Endothelial cell of umbilical vein (primary cell): ENCODE measurements at regions of chr9 and their contacts with region 1.

Region 1: GRCh38 chr9:122264360-122265148 is at the starts of genes MRRF and RBM18:
- DNase-seq: peak; percentile 95
- H3K4me3 ChIP-seq: peak within 1 kb of the TSS; percentile 53 to 88 (median 76)
- H3K27ac ChIP-seq: peak within 1 kb of the TSS; percentile 68
- H3K4me1 ChIP-seq: peaks cover 26% of the 10 kb centered on the region
- H3K27me3 ChIP-seq: no peaks in the 10 kb centered on the region
- CTCF ChIP-seq: no peak
- POLR2A ChIP-seq: peak; percentile 85
- total RNA-seq, gene MRRF: 36.4 and 36.5 TPM in 2 replicates
- total RNA-seq, gene RBM18: 26.9 and 28.6 TPM in 2 replicates

Region 2: DNA sequence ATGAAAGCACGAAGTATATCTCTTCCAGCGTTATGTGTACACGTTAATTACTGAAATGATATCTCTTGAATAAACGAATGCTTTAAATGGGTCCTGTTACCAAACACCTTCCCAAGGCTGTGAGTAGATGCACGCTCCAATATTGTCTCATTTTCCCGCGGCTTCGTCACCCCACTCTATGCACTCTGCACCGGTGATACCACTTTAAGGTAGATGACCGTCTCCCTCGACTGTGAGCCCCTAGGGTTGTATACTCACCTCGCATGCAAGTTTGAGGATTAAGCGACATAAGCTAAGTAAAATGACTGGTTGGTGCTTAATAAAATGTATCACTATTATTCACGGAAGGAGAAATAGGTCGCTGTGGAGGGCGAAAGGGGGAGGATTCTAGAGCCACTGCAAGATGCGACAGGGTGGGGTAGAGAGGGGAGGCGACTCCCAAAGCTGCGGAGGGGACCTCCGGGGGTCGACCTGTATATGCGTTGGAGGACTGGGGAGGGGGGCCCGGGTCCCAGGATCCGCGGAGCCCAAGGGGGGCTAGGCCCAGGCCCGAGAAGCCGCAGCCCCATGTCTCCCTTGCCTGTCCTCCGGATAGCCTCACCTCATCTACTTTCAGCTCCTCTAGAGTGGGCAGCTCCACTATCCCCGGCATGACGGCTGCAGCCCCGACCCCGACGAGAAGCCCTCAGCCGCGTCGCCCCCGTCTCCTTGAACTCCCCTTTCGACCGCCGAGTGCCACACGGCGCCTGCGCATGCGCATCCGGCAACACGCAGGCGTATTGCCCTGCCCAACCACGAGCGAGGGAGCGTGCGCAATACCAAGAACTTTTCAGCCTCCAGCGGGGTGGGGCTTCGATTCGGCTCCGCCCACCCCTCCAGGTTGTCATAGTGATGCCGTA is 105.3 kb before region 1 on chr9 and contains the starts of genes MORN5 and NDUFA8:
- CTCF ChIA-PET with region 1: no interaction called
- POLR2A ChIA-PET with region 1: no interaction called
- dilution Hi-C with region 1: no loop called
- intact Hi-C with region 1: loop called (anchors 2 kb)
- DNase-seq: peak; percentile 97
- H3K4me3 ChIP-seq: peak within 1 kb of the TSS; percentile 56 to 100 (median 87)
- H3K27ac ChIP-seq: peak within 1 kb of the TSS; percentile 0
- H3K4me1 ChIP-seq: peaks cover 8% of the 10 kb centered on the region
- H3K27me3 ChIP-seq: peaks cover 8 to 16% of the 10 kb centered on the region in 2 experiments
- CTCF ChIP-seq: no peak
- POLR2A ChIP-seq: peak; percentile 90
- total RNA-seq, gene MORN5: not detected in 2 replicates
- total RNA-seq, gene NDUFA8: 65.5 and 68.2 TPM in 2 replicates

Region 3: GRCh38 chr9:122228568-122229484 is 35.7 kb before region 1 on chr9 and contains the start of gene LHX6:
- CTCF ChIA-PET with region 1: no interaction called
- POLR2A ChIA-PET with region 1: no interaction called
- dilution Hi-C with region 1: no loop called
- intact Hi-C with region 1: loop called (anchors 1 kb)
- DNase-seq: peak; percentile 43
- H3K4me3 ChIP-seq: peak within 1 kb of the TSS; percentile 18 to 55 (median 41)
- H3K27ac ChIP-seq: no peak within 1 kb of the TSS
- H3K4me1 ChIP-seq: peaks cover 10% of the 10 kb centered on the region
- H3K27me3 ChIP-seq: peaks cover 42 to 54% of the 10 kb centered on the region in 2 experiments
- CTCF ChIP-seq: no peak
- POLR2A ChIP-seq: no peak
- total RNA-seq, gene LHX6: 9.4 and 18.4 TPM in 2 replicates

Region 4: GRCh38 chr9:122248448-122248915 is 16.1 kb before region 1 on chr9:
- CTCF ChIA-PET with region 1: interaction called, 20 read pairs
- POLR2A ChIA-PET with region 1: interaction called, 14 read pairs
- dilution Hi-C with region 1: no loop called
- intact Hi-C with region 1: loop called (anchors 1 kb)
- DNase-seq: peak; percentile 78
- H3K4me3 ChIP-seq: no peak overlapping the region
- H3K27ac ChIP-seq: peak overlapping the region; percentile 75
- H3K4me1 ChIP-seq: peaks cover 34% of the 10 kb centered on the region
- H3K27me3 ChIP-seq: no peaks in the 10 kb centered on the region
- CTCF ChIP-seq: no peak
- POLR2A ChIP-seq: no peak

Region 5: DNA sequence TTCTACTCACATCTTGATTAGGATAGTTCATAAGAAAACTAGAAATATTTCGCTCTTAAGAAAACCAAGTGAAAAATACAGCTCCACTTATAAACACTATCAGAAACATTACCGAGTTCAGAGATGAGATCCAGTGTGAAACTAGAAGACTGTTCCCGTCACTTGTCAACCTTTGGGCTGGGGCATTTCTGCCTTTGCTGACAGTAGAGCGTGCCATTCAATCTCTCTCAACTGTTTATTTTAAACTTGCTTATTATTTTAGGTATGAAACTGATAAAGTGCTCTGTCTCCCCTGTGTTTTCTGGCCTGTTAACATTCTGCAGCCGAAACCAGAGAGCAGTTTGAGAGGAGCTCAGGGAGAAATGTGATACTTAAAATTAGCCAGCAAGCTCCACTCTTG is 16.8 kb after region 1 on chr9:
- CTCF ChIA-PET with region 1: interaction called, 10 read pairs
- POLR2A ChIA-PET with region 1: no interaction called
- dilution Hi-C with region 1: no loop called
- intact Hi-C with region 1: no loop called
- DNase-seq: no peak
- H3K4me3 ChIP-seq: no peak overlapping the region
- H3K27ac ChIP-seq: peak overlapping the region; percentile 30
- H3K4me1 ChIP-seq: peaks cover 18% of the 10 kb centered on the region
- H3K27me3 ChIP-seq: no peaks in the 10 kb centered on the region
- CTCF ChIP-seq: no peak
- POLR2A ChIP-seq: no peak

Region 6: GRCh38 chr9:122307925-122308324 is 43.4 kb after region 1 on chr9:
- CTCF ChIA-PET with region 1: interaction called, 7 read pairs
- POLR2A ChIA-PET with region 1: interaction called, 9 read pairs
- dilution Hi-C with region 1: no loop called
- intact Hi-C with region 1: loop called (anchors 1 kb)
- DNase-seq: peak; percentile 92
- H3K4me3 ChIP-seq: no peak overlapping the region
- H3K27ac ChIP-seq: peak overlapping the region; percentile 84
- H3K4me1 ChIP-seq: peaks cover 53% of the 10 kb centered on the region
- H3K27me3 ChIP-seq: no peaks in the 10 kb centered on the region
- CTCF ChIP-seq: no peak
- POLR2A ChIP-seq: no peak

Region 7: GRCh38 chr9:122816163-122816867 is 551.8 kb after region 1 on chr9:
- CTCF ChIA-PET with region 1: no interaction called
- POLR2A ChIA-PET with region 1: no interaction called
- dilution Hi-C with region 1: no loop called
- intact Hi-C with region 1: loop called (anchors 5 kb)
- DNase-seq: peak; percentile 98
- H3K4me3 ChIP-seq: peak overlapping the region in 2 of 3 experiments; percentile 21 to 39
- H3K27ac ChIP-seq: peak overlapping the region; percentile 97
- H3K4me1 ChIP-seq: peaks cover 61% of the 10 kb centered on the region
- H3K27me3 ChIP-seq: no peaks in the 10 kb centered on the region
- CTCF ChIP-seq: no peak
- POLR2A ChIP-seq: peak; percentile 75